Activated CD4-positive, alpha-beta T cell treated with anti-CD3 and anti-CD28 coated beads, Interleukin-2, amount 10 ng/mL, durations not matched to agents 24 days and 14 days (primary cell): ENCODE measurements at regions of chr6 and their contacts with region 1.

Region 1: DNA sequence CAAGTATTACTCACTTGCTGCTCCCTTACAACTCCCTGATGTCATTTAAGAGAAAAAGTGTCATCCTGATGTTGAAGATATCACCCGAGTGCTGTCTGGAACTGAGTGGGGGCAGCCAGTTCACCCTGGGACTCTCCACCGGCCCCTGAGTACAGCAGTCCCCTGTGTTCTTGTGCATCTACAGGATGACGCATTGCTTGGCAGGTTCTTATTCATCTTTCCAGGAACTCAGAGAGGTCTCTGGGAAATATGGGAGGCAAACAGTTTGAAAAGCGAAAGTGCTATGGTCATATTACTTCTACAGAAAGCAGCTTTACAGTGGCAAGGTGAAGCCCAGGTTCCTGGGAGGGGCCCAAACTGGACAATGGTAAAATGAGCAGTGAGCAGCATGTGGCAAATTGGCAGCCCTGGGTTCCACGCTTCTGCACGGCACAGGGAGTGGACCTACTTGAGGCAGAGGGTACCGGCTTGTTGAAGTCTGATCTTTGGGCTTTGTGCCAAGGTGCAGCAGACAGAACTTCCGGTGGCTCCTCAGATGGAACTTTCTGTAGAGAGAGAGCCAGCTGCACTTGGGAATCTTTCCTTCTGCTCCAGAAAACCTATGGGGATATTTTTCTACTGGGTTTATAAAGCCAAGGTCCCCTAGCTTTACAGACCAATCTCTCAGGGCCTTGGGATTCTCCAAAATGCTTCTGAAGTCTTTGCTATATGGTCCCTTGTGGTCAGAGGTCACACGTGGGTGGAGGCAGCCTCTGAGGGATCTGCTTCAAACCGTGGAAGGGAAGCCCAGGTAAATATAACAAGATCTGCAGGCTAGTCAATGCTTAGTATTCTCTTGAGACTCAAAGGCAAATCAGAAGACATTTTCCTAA is 128.3 kb downstream of the MAP3K7 start:
- DNase-seq: peak; percentile 88
- H3K4me3 Mint-ChIP-seq: peak overlapping the region; percentile 54
- H3K27ac Mint-ChIP-seq: peak overlapping the region; percentile 91
- H3K4me1 Mint-ChIP-seq: peaks cover 66% of the 10 kb centered on the region
- H3K27me3 Mint-ChIP-seq: no peaks in the 10 kb centered on the region

Region 2: GRCh38 chr6:90216072-90216977 is 242.3 kb before region 1 on chr6:
- intact Hi-C with region 1: no loop called
- DNase-seq: peak; percentile 79
- H3K4me3 Mint-ChIP-seq: peak overlapping the region; percentile 48
- H3K27ac Mint-ChIP-seq: no peak overlapping the region
- H3K4me1 Mint-ChIP-seq: peaks cover 40% of the 10 kb centered on the region
- H3K27me3 Mint-ChIP-seq: no peaks in the 10 kb centered on the region

Region 3: GRCh38 chr6:90406142-90406794 is 52.3 kb before region 1 on chr6:
- intact Hi-C with region 1: loop called (anchors 1 kb)
- DNase-seq: peak; percentile 77
- H3K4me3 Mint-ChIP-seq: peak overlapping the region; percentile 12
- H3K27ac Mint-ChIP-seq: peak overlapping the region; percentile 82
- H3K4me1 Mint-ChIP-seq: peaks cover 67% of the 10 kb centered on the region
- H3K27me3 Mint-ChIP-seq: no peaks in the 10 kb centered on the region

Region 4: DNA sequence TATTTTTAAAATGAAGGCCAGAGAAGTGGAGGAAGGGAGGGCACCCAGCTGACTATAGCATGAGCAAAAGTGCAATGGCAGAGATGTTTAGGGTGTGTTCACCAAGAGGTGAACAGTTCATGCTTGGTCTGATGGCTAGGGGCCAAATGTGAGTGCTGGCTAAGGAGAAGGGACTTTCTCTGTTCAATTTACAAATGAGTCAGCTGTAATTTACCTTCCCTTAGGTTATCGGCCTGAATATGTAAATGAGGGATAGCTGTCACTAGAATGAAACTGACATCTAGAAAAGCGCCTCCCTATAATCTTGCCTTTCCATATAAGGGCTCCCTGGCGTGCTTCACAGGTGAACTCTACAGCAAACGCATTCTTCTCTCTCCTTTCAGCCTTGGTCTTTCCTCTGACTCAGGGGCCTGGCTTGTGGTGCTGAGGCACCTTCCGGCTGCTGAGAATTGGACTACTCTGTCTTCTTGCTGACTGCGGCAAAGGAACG is 47.3 kb before region 1 on chr6:
- intact Hi-C with region 1: loop called (anchors 1 kb)
- DNase-seq: peak; percentile 86
- H3K4me3 Mint-ChIP-seq: peak overlapping the region; percentile 18
- H3K27ac Mint-ChIP-seq: peak overlapping the region; percentile 84
- H3K4me1 Mint-ChIP-seq: peaks cover 71% of the 10 kb centered on the region
- H3K27me3 Mint-ChIP-seq: peaks cover 2% of the 10 kb centered on the region

Region 5: DNA sequence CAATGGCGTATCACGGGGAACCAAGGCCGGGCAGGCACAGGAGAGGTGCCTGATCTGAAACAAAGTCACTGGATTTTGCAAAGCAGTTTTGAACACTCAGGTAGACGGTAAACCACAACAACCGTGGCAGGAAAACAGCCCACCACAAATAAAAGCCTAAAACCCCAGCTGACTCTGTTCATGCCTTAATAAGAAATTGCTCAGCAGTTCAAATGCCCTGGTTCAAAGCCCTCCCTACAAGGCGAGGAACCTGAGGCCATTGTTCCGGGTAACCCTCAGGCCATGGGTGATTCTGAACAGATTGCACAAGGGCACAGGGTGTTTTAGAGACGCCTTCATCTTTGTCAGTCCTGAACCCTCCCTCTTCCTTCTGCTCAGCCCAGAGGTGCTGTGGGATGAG is 14.2 kb after region 1 on chr6:
- intact Hi-C with region 1: loop called (anchors 1 kb)
- DNase-seq: peak; percentile 85
- H3K4me3 Mint-ChIP-seq: peak overlapping the region; percentile 69
- H3K27ac Mint-ChIP-seq: peak overlapping the region; percentile 92
- H3K4me1 Mint-ChIP-seq: peaks cover 91% of the 10 kb centered on the region
- H3K27me3 Mint-ChIP-seq: no peaks in the 10 kb centered on the region